GM10248 (cell line): ENCODE measurements at regions of chr5 and their contacts with region 1.

Region 1: DNA sequence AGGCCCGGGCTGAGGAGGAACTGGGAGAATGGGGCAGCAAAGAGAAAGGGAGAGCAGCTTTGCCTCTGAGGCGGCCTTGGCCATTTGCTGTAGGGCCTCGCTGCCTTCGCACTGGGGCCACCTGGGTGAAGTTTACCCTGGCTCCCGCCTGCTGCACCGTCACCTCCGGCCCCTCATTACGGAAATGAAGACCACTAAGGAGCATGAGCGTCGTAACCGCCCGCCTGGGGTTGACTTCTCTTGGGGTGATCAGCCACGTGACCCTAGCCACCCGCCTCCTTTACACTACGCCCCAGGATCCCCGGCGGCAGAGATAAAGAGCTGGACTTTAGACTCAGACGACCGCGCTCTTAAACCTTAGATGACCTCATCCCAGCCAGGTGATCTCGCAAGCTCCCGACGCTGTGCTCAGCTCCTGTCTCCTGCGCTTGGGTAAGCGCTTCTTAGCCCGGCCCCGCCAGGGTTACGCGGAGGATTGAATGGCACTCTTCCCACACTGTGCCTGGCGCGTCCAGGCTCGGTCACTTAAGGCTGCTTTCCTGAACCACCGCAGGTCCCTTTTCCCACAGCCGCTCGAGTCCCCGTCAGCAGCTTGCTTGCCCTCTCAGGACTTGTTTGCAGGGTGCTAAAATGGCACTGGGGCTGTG is 107.9 kb upstream of the LARP1 start:
- DNase-seq: peak; percentile 67
- CTCF ChIP-seq: no peak

Region 2: DNA sequence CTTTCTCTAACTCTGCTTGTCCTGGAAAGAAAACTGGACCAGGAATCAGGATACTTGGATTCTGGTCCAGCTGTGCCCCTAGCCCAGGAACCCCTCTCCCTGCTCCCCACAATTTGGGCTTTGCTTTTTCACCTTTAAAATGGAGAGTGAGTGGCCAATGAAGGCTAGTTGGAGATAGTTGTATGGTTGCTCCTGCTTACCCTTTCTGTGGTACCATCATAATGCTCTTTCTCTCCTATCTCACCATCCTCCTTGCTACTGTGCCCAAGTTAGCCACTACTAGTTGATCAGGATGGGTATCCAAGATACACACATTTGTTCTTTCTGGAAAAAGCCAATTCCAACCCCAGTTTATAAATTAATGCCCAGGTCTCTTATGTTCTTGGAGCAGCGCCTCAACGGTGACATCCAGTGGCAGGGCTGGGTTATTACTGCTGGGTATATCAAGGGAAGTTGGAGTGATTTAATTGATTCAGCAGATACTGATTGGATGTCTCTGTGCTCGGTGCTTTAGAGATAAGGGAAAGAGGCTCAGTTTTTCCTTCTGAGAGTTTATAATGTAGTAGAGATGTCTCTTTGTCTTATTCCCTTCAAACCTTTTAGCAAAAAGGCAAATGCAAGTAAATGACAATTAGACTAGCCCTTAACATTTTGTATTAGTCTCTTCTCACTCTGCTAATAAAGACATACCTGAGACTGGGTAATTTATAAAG is 164.6 kb after region 1 on chr5:
- CTCF ChIA-PET with region 1: interaction called, 13 read pairs
- POLR2A ChIA-PET with region 1: no interaction called
- DNase-seq: peak; percentile 71
- CTCF ChIP-seq: peak; percentile 79

Region 3: DNA sequence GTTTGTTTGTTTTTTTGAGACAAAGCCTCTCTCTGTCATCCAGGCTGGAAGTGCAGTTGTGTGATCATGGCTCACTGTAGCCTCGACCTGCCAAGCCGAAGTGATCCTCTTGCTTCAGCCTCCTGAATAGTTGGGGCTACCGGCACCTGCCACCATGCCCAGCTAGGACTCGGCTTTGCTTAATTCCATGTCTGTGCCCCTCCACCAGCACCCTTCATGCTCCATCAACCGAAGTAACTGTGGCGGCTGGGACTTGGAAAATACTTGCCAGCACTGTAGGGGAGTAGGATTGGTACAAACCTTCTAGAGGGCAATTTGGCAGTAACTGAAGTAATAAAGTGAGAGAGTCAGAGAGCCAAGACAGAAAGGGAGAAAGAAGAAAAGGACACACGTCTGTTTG is 184.2 kb after region 1 on chr5:
- CTCF ChIA-PET with region 1: no interaction called
- POLR2A ChIA-PET with region 1: no interaction called
- DNase-seq: no peak
- CTCF ChIP-seq: no peak

Region 4: GRCh38 chr5:155004138-155004744 is 357.0 kb after region 1 on chr5:
- CTCF ChIA-PET with region 1: interaction called, 36 read pairs
- POLR2A ChIA-PET with region 1: no interaction called
- DNase-seq: peak; percentile 26
- CTCF ChIP-seq: peak; percentile 43